ENCODE measurements at regions of chr1 and their contacts with region 1.

Region 1: GRCh38 chr1:61851849-61852669 is 109.8 kb downstream of the PATJ start:
- DNase-seq: no peak
- ATAC-seq: peak; percentile 51

Region 2: GRCh38 chr1:59971464-59971911 is 1880.6 kb before region 1 on chr1:
- intact Hi-C with region 1: loop called (anchors 5 kb)
- DNase-seq: peak; percentile 80
- ATAC-seq: peak; percentile 72

Region 3: GRCh38 chr1:60281360-60281932 is 1570.6 kb before region 1 on chr1:
- intact Hi-C with region 1: loop called (anchors 10 kb)
- DNase-seq: no peak
- ATAC-seq: peak; percentile 88

Region 4: GRCh38 chr1:60969971-60970509 is 882.0 kb before region 1 on chr1:
- intact Hi-C with region 1: loop called (anchors 5 kb)
- DNase-seq: no peak
- ATAC-seq: peak; percentile 69

Region 5: GRCh38 chr1:61950418-61950817 is 98.4 kb after region 1 on chr1:
- intact Hi-C with region 1: no loop called
- DNase-seq: no peak
- ATAC-seq: no peak

Measured in Right ventricle myocardium inferior (tissue), 1 donor.